ENCODE measurements at regions of chr4 and their contacts with region 1.

Region 1: GRCh38 chr4:98928505-98929340 is at the start of gene EIF4E:
- DNase-seq: peak; percentile 98
- H3K27ac ChIP-seq: peak within 1 kb of the TSS; percentile 99
- CTCF ChIP-seq: peak; percentile 17

Region 2: GRCh38 chr4:98939892-98940298 is 11.2 kb after region 1 on chr4:
- CTCF ChIA-PET with region 1: interaction called, 11 read pairs
- POLR2A ChIA-PET with region 1: no interaction called
- DNase-seq: peak; percentile 48
- H3K27ac ChIP-seq: no peak overlapping the region
- CTCF ChIP-seq: peak; percentile 76

Region 3: DNA sequence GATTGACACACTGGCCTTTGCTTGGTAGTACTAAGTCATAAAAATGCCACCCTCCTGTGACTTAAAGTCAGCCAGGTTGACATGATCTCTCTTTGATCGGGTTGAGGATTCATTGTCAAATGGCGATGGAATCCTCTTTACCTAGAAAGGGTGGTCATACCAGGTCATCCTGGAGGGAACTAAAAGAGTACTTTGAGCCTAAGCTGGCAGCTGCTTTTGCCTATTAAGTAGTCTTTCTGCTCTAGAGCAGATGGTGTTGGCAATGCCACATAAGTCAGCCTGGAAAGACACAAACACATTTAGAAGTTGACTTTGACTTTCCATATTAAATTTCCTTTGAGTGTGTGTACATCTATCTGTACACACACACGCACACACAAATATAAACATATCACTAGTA is 768.1 kb after region 1 on chr4:
- CTCF ChIA-PET with region 1: no interaction called
- POLR2A ChIA-PET with region 1: interaction called, 10 read pairs
- DNase-seq: no peak
- H3K27ac ChIP-seq: no peak overlapping the region
- CTCF ChIP-seq: no peak